AG04449 (cell line): ENCODE measurements at regions of chr7 and their contacts with region 1.

Region 1: DNA sequence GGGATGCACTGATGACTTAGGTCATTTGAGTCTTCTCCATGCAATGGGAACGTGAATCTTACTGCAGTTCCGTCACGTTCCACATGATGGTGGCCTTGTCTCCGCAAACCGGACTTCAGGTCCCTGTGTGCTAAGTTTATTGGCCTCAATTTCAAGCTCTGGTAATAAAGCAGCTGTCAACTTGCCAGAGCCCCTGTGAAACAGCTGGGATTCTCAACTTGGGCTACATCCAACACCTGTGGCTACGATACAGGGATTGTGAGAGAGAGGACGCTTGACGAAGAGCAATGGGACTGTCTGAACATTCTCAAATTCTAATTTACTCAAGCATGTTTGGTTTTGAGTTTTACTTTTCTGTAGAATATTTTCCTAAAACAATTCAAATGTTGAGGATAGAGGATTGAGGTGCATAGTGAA is 174.2 kb downstream of the PTN start:
- DNase-seq: peak; percentile 46
- H3K4me3 ChIP-seq: no peak overlapping the region
- CTCF ChIP-seq: peak; percentile 75

Region 2: GRCh38 chr7:137151041-137151689 is 18.1 kb before region 1 on chr7:
- CTCF ChIA-PET with region 1: interaction called, 12 read pairs
- POLR2A ChIA-PET with region 1: no interaction called
- DNase-seq: no peak
- H3K4me3 ChIP-seq: no peak overlapping the region
- CTCF ChIP-seq: no peak